Caco-2 (cell line): ENCODE measurements at regions of chr6 and their contacts with region 1.

Region 1: DNA sequence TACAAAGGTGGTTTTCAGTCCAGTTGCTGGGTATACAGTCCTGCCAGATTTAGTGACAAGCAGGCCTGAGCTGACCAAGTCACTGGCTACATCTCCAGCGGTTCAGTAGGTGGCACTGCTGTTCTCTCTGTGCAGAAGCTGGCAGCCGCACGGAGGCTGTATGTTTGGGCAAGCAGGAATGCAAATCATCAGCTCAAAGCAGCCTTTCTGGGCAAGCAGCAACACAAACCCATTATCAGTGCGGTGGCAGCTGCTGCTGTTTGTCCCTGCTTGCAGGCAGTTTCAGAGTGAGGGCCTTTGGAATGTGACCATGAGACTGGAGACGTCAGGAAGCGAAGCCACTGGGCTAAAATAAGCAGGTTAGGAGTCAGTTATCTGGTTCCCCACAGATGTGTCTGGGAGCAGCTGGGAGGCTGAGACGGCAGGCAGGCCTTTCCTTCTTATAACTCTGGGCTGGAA is 72.5 kb downstream of the TXLNB start:
- DNase-seq: peak; percentile 79 to 85
- H3K4me3 ChIP-seq: no peak overlapping the region
- H3K4me3 Mint-ChIP-seq: peak overlapping the region; percentile 45
- H3K27ac Mint-ChIP-seq: no peak overlapping the region
- H3K4me1 ChIP-seq: no peaks in the 10 kb centered on the region
- H3K4me1 Mint-ChIP-seq: peaks cover 6% of the 10 kb centered on the region
- H3K27me3 ChIP-seq: no peaks in the 10 kb centered on the region
- H3K27me3 Mint-ChIP-seq: peaks cover 4% of the 10 kb centered on the region
- CTCF ChIP-seq: peak; percentile 61 to 88

Region 2: DNA sequence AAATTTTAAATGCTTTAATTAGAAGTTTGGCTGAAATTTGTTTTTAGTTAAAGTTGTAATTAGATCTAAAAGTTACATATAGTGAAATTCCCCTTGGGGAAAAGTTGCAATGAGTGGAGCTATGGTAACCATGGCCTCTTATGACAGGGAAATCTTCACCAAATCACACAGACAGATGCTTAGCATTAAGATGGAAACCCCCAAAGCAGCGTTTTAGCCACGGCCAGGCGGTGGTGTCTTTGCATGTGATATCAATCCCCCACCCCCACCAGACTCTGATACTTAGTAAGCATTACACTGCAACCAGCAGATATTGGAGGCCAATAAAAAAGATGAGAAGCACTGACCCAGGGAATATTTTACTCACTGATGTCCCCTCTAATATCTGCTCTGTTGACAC is 307.0 kb before region 1 on chr6:
- CTCF ChIA-PET with region 1: no interaction called
- POLR2A ChIA-PET with region 1: no interaction called
- intact Hi-C with region 1: no loop called
- DNase-seq: no peak
- H3K4me3 ChIP-seq: no peak overlapping the region
- H3K4me3 Mint-ChIP-seq: no peak overlapping the region
- H3K27ac Mint-ChIP-seq: no peak overlapping the region
- H3K4me1 ChIP-seq: peaks cover 4% of the 10 kb centered on the region; the same call in 1 of the 2 replicates
- H3K4me1 Mint-ChIP-seq: no peaks in the 10 kb centered on the region
- H3K27me3 ChIP-seq: no peaks in the 10 kb centered on the region
- H3K27me3 Mint-ChIP-seq: no peaks in the 10 kb centered on the region
- CTCF ChIP-seq: no peak

Region 3: GRCh38 chr6:139134817-139135581 is 84.3 kb before region 1 on chr6 and contains the start of gene HECA:
- CTCF ChIA-PET with region 1: no interaction called
- POLR2A ChIA-PET with region 1: no interaction called
- intact Hi-C with region 1: loop called (anchors 2 kb)
- DNase-seq: peak; percentile 96 to 97
- H3K4me3 ChIP-seq: peak within 1 kb of the TSS; percentile 89
- H3K4me3 Mint-ChIP-seq: peak within 1 kb of the TSS; percentile 82
- H3K27ac Mint-ChIP-seq: peak within 1 kb of the TSS; percentile 74
- H3K4me1 ChIP-seq: no peaks in the 10 kb centered on the region
- H3K4me1 Mint-ChIP-seq: peaks cover 7% of the 10 kb centered on the region
- H3K27me3 ChIP-seq: no peaks in the 10 kb centered on the region
- H3K27me3 Mint-ChIP-seq: no peaks in the 10 kb centered on the region
- CTCF ChIP-seq: no peak
- total RNA-seq, gene HECA: 4.9 and 5.2 TPM in 2 replicates

Region 4: DNA sequence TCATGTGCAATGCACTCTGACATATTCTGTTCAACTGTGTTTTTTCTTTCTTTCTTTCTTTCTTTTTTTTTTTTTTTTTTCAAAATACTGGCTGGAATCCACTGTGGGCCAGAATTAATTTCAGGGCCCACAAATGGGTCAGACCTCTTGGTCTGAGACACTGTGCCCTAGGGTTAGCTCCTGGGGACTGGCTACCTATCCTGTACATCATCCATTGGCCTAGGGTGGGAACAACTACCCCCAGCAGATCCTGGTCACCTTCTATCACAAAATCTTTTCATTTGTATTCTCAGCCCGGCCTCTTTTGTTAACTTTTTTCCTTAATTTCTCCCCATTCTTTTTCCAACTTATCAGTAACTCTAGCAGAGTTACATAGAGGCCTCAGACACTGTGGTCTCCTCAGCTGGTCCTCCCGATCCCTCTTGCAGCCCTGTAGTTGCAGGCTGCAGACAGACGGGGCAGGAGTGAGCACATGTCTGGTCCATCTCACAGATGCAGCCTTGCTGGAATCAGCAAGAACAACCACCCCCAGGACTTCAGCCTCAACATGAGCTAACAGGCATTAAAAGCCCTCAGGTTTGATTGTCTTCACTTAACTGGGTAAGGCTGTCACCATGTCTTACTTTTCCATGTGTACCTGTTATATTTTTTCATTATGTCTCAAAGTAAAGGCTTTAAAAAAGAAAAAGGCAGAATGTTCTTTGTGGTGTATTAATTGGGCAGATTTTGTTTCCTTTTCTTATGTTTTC is 31.2 kb after region 1 on chr6:
- CTCF ChIA-PET with region 1: interaction called, 6 read pairs
- POLR2A ChIA-PET with region 1: no interaction called
- intact Hi-C with region 1: loop called (anchors 1 kb)
- DNase-seq: peak; percentile 61 to 71
- H3K4me3 ChIP-seq: no peak overlapping the region
- H3K4me3 Mint-ChIP-seq: no peak overlapping the region
- H3K27ac Mint-ChIP-seq: no peak overlapping the region
- H3K4me1 ChIP-seq: no peaks in the 10 kb centered on the region
- H3K4me1 Mint-ChIP-seq: no peaks in the 10 kb centered on the region
- H3K27me3 ChIP-seq: no peaks in the 10 kb centered on the region
- H3K27me3 Mint-ChIP-seq: no peaks in the 10 kb centered on the region
- CTCF ChIP-seq: peak; percentile 59 to 74

Region 5: DNA sequence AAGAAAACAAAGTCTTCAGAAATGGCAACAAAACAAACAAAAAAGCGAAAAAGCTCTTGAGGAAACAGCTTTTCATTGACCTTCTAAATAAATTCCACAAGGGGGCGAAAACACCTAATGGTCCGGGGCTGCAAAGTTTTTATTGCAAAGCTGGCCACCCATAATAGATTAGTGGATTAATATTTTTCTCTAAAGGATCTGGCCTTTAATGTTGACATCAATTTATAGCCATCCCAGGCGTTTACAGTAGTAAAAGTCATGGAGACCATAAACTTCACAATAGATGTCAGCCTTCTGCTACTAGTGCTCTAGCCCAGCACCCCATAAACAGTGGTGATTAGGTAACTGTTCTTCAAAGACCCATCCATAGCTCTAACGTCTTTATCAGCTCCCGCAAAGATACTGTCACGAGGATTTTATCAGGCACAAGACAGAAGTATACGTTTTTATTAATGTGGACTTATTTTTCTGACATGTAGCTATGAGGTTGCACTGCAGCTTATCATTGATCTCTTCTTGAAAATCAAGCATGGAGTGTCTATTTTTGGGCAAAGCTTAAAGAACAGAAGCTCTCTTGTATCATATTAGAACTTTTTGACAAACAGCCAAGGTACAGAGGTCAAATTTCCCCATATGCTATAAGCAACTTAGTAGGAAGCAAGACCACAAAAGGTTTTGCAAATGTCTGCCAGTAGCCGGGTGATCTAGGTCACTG is 150.4 kb after region 1 on chr6:
- CTCF ChIA-PET with region 1: interaction called, 63 read pairs
- POLR2A ChIA-PET with region 1: interaction called, 4 read pairs
- intact Hi-C with region 1: loop called (anchors 1 kb)
- DNase-seq: peak in 1 of 2 experiments; percentile 46
- H3K4me3 ChIP-seq: no peak overlapping the region
- H3K4me3 Mint-ChIP-seq: peak overlapping the region; percentile 48
- H3K27ac Mint-ChIP-seq: peak overlapping the region; percentile 61
- H3K4me1 ChIP-seq: peaks cover 45% of the 10 kb centered on the region
- H3K4me1 Mint-ChIP-seq: peaks cover 22% of the 10 kb centered on the region
- H3K27me3 ChIP-seq: no peaks in the 10 kb centered on the region
- H3K27me3 Mint-ChIP-seq: no peaks in the 10 kb centered on the region
- CTCF ChIP-seq: peak; percentile 62 to 64

Region 6: GRCh38 chr6:140441256-140441655 is 1222.0 kb after region 1 on chr6:
- CTCF ChIA-PET with region 1: no interaction called
- POLR2A ChIA-PET with region 1: no interaction called
- intact Hi-C with region 1: loop called (anchors 2 kb)
- DNase-seq: peak; percentile 49 to 50
- H3K4me3 ChIP-seq: no peak overlapping the region
- H3K4me3 Mint-ChIP-seq: no peak overlapping the region
- H3K27ac Mint-ChIP-seq: no peak overlapping the region
- H3K4me1 ChIP-seq: no peaks in the 10 kb centered on the region
- H3K4me1 Mint-ChIP-seq: no peaks in the 10 kb centered on the region
- H3K27me3 ChIP-seq: no peaks in the 10 kb centered on the region
- H3K27me3 Mint-ChIP-seq: no peaks in the 10 kb centered on the region
- CTCF ChIP-seq: peak in 1 of 2 experiments; percentile 42